CD4-positive, alpha-beta T cell (primary cell): ENCODE measurements at regions of chr15 and their contacts with region 1.

Region 1: DNA sequence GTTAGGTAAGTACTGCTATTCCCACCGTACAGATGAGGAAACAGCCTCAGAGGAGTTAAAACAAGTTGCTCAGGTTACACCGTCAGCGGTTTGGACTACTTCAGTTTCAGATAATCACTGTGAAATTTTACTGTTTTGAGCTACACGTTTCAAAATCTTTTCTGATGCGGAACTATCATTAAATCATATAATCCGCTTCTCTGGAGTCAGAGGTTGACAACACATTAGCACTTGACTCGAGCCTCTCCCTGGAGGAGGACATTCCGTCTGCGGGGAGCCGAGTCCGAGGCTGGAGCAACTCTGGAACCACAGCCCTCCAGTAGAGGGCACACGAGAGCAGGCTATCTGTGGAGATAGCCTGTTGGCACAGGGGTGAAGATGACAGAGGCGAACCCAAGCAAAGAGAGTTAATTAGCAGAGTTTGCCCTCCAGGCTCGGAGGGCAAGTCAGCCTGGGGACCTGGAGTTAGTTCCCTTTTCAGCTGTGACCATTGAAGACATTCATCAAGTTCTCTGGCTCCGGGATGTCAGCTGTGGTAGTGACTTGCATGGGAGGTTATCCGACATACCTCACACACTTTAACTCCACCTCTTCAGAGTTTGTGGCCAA is 131.2 kb downstream of the IGF1R start:
- DNase-seq: peak; percentile 52 to 86 (median 66)
- ATAC-seq: peak; percentile 85
- H3K4me3 ChIP-seq: no peak overlapping the region
- H3K4me3 Mint-ChIP-seq: peak overlapping the region; percentile 46
- H3K27ac ChIP-seq: no peak overlapping the region
- H3K27ac Mint-ChIP-seq: no peak overlapping the region
- H3K4me1 ChIP-seq: peaks cover 27% of the 10 kb centered on the region
- H3K4me1 Mint-ChIP-seq: peaks cover 50% of the 10 kb centered on the region
- H3K27me3 ChIP-seq: no peaks in the 10 kb centered on the region
- H3K27me3 Mint-ChIP-seq: no peaks in the 10 kb centered on the region
- CTCF ChIP-seq: peak; percentile 92

Region 2: GRCh38 chr15:98518823-98519561 is 260.6 kb before region 1 on chr15:
- CTCF ChIA-PET with region 1: interaction called, 3 read pairs
- POLR2A ChIA-PET with region 1: no interaction called
- intact Hi-C with region 1: loop called (anchors 5 kb)
- DNase-seq: peak; percentile 13 to 84 (median 31)
- ATAC-seq: peak; percentile 63
- H3K4me3 ChIP-seq: no peak overlapping the region
- H3K4me3 Mint-ChIP-seq: no peak overlapping the region
- H3K27ac ChIP-seq: no peak overlapping the region
- H3K27ac Mint-ChIP-seq: no peak overlapping the region
- H3K4me1 ChIP-seq: no peaks in the 10 kb centered on the region
- H3K4me1 Mint-ChIP-seq: peaks cover 6% of the 10 kb centered on the region
- H3K27me3 ChIP-seq: no peaks in the 10 kb centered on the region
- H3K27me3 Mint-ChIP-seq: peaks cover 8% of the 10 kb centered on the region
- CTCF ChIP-seq: peak; percentile 88

Region 3: GRCh38 chr15:98523912-98524662 is 255.5 kb before region 1 on chr15:
- CTCF ChIA-PET with region 1: interaction called, 3 read pairs
- POLR2A ChIA-PET with region 1: no interaction called
- intact Hi-C with region 1: loop called (anchors 5 kb)
- DNase-seq: no peak
- ATAC-seq: no peak
- H3K4me3 ChIP-seq: no peak overlapping the region
- H3K4me3 Mint-ChIP-seq: no peak overlapping the region
- H3K27ac ChIP-seq: no peak overlapping the region
- H3K27ac Mint-ChIP-seq: no peak overlapping the region
- H3K4me1 ChIP-seq: no peaks in the 10 kb centered on the region
- H3K4me1 Mint-ChIP-seq: peaks cover 2% of the 10 kb centered on the region
- H3K27me3 ChIP-seq: peaks cover 0 to 1% of the 10 kb centered on the region in 2 experiments
- H3K27me3 Mint-ChIP-seq: peaks cover 9% of the 10 kb centered on the region
- CTCF ChIP-seq: no peak

Region 4: DNA sequence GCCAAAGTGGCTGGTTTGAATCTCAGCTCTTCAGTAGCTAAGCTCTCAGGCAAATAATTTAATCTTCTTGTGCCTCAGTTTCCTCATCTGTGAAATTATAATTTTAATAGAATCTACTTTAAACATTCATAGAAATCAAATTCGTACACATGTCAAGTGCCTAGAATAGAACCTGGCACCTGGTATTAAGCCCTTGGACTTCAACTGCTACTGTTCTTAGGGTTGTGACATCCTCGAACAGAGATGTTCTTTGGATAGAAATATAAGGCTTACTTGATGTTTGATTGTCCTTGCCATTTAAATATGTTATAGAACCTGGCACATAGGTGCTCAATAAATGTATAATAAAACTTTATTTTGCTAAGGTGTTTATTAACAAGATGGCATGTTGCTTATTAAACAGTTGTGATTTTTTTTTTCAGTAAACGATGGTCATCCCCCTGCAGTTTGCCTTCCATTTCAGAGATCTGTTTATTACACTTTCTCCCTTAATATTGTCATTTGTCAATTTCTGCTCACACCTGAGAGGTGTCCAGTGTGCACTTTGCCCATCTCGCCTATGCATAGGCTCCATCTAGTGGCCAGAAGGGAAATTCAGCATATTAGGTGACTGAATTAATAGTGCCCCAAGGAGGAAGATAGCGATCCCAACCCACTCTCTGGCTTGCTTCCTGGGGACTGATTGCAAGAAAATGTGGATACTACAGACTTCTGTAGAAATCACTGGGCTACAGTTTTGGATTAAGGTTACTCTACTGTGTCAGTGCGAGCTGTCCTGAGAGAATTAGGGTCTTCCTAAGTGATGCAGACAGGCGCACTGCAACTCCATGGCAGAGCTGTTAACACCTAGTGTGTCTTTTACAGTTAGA is 120.5 kb before region 1 on chr15:
- CTCF ChIA-PET with region 1: no interaction called
- POLR2A ChIA-PET with region 1: no interaction called
- intact Hi-C with region 1: loop called (anchors 5 to 10 kb)
- DNase-seq: peak in 7 of 14 experiments; percentile 10 to 73 (median 52)
- ATAC-seq: peak; percentile 81
- H3K4me3 ChIP-seq: no peak overlapping the region
- H3K4me3 Mint-ChIP-seq: no peak overlapping the region
- H3K27ac ChIP-seq: no peak overlapping the region
- H3K27ac Mint-ChIP-seq: no peak overlapping the region
- H3K4me1 ChIP-seq: peaks cover 9% of the 10 kb centered on the region
- H3K4me1 Mint-ChIP-seq: peaks cover 56% of the 10 kb centered on the region
- H3K27me3 ChIP-seq: no peaks in the 10 kb centered on the region
- H3K27me3 Mint-ChIP-seq: no peaks in the 10 kb centered on the region
- CTCF ChIP-seq: peak; percentile 95

Region 5: GRCh38 chr15:98850961-98851573 is 71.5 kb after region 1 on chr15:
- CTCF ChIA-PET with region 1: interaction called, 24 read pairs
- POLR2A ChIA-PET with region 1: no interaction called
- intact Hi-C with region 1: no loop called
- DNase-seq: peak; percentile 58 to 84 (median 67)
- ATAC-seq: peak; percentile 73
- H3K4me3 ChIP-seq: peak overlapping the region; percentile 87
- H3K4me3 Mint-ChIP-seq: peak overlapping the region; percentile 93
- H3K27ac ChIP-seq: peak overlapping the region; percentile 7 to 53
- H3K27ac Mint-ChIP-seq: peak overlapping the region; percentile 89
- H3K4me1 ChIP-seq: peaks cover 39% of the 10 kb centered on the region
- H3K4me1 Mint-ChIP-seq: peaks cover 77% of the 10 kb centered on the region
- H3K27me3 ChIP-seq: no peaks in the 10 kb centered on the region
- H3K27me3 Mint-ChIP-seq: no peaks in the 10 kb centered on the region
- CTCF ChIP-seq: peak; percentile 61

Region 6: GRCh38 chr15:98881526-98882520 is 102.3 kb after region 1 on chr15:
- CTCF ChIA-PET with region 1: interaction called, 3 read pairs
- POLR2A ChIA-PET with region 1: no interaction called
- intact Hi-C with region 1: loop called (anchors 1 kb)
- DNase-seq: peak in 4 of 14 experiments; percentile 8 to 66 (median 55)
- ATAC-seq: no peak
- H3K4me3 ChIP-seq: no peak overlapping the region
- H3K4me3 Mint-ChIP-seq: no peak overlapping the region
- H3K27ac ChIP-seq: no peak overlapping the region
- H3K27ac Mint-ChIP-seq: peak overlapping the region; percentile 9
- H3K4me1 ChIP-seq: no peaks in the 10 kb centered on the region
- H3K4me1 Mint-ChIP-seq: peaks cover 27% of the 10 kb centered on the region
- H3K27me3 ChIP-seq: no peaks in the 10 kb centered on the region
- H3K27me3 Mint-ChIP-seq: no peaks in the 10 kb centered on the region
- CTCF ChIP-seq: peak; percentile 79

Region 7: DNA sequence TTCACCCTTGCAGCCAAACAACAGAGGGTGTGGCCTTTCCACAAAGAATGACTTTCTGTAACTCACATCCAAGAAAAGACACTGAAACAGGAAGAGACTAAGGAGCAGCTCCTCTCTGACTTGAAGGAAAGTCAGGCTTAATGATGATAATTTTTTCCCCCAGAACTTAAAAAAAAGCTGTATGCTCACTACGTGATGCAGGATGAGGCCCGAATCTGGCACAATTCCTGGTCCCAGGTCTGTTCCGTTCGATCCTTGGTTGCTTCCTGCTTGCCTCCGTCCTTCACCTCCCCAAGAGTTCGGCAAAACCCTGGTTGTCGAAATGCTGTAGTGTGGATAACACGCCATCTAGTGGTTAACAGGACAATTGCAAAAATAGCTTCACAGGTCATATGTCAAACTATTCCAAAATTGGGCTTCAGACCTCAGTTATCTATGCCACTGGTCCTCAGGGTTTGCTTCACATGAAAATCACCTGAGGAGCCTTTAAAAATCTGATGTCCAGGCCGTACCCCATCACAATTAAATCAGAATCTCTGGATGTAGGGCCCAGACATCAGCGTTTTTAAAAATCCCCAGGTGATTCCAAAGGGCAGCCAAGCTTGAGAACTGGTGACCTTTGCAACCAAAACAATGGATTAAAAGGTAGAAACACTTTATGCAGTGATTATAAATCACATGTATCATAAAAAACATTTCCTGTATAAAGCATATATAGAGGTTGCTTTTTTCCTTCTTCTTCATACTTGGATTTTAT is 297.2 kb after region 1 on chr15:
- CTCF ChIA-PET with region 1: interaction called, 5 read pairs
- POLR2A ChIA-PET with region 1: no interaction called
- intact Hi-C with region 1: loop called (anchors 2 to 5 kb)
- DNase-seq: peak in 11 of 14 experiments; percentile 6 to 77 (median 19)
- ATAC-seq: peak; percentile 76
- H3K4me3 ChIP-seq: peak overlapping the region; percentile 46
- H3K4me3 Mint-ChIP-seq: peak overlapping the region; percentile 82
- H3K27ac ChIP-seq: no peak overlapping the region
- H3K27ac Mint-ChIP-seq: no peak overlapping the region
- H3K4me1 ChIP-seq: peaks cover 4% of the 10 kb centered on the region
- H3K4me1 Mint-ChIP-seq: peaks cover 6% of the 10 kb centered on the region
- H3K27me3 ChIP-seq: no peaks in the 10 kb centered on the region
- H3K27me3 Mint-ChIP-seq: peaks cover 10% of the 10 kb centered on the region
- CTCF ChIP-seq: peak; percentile 87